B cell (primary cell): ENCODE measurements at regions of chr7 and their contacts with region 1.

Region 1: DNA sequence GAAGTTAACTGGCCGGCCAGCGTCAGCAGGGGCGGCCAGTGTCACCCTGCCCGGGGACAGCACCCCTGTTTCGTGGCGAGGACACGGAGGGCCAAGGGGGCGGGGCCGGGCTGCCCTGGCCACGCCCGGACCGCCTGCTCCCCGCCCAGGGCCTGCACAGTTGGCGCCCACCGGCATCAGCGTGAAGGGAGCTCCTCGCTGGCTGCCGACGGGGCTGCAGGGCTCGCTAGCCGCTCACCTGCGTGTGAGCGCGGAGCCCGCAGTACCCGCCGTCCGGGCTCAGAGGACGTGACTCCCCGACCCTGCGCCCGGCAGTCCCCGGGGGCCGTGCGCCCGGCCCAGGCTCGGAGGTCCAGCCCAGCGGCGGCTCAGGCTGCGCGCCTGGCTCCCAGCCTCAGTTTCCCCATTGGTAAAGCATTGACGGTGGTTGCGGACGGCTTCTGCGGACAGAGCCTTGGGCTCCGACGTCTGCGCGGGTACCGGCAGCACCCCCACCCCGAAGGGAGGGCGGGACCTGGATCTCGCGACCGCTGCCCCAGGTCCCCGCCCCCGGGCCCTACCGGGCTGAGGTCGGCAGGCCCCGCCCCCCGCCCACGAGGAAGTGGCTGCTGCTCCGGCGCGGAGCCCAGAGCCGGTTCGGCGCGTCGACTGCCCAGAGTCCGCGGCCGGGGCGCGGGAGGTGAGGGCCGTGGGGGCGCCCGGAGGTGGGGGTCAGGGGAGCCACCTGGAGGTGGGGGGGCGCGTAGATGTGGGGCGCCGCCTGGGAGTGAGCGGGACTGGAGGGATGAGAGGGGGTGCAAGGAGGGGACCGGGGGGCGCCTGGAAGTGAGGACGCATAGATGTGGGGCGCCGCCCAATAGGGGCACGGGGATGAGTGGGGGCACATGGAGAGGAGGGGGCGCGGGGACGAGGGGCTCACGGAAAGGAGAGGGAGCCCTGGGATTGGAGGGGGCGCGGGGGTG is at the start of gene ARPC1B:
- DNase-seq: peak; percentile 90
- ATAC-seq: peak; percentile 78
- H3K4me3 ChIP-seq: peak within 1 kb of the TSS; percentile 57 to 91 (median 78)
- H3K4me3 Mint-ChIP-seq: peak within 1 kb of the TSS; percentile 84
- H3K27ac ChIP-seq: peak within 1 kb of the TSS; percentile 56 to 94
- H3K27ac Mint-ChIP-seq: peak within 1 kb of the TSS; percentile 82
- H3K4me1 ChIP-seq: peaks cover 35 to 44% of the 10 kb centered on the region in 2 donors
- H3K4me1 Mint-ChIP-seq: peaks cover 19% of the 10 kb centered on the region
- H3K27me3 ChIP-seq: no peaks in the 10 kb centered on the region
- H3K27me3 Mint-ChIP-seq: no peaks in the 10 kb centered on the region
- CTCF ChIP-seq: no peak
- total RNA-seq, gene ARPC1B: 142 and 164 TPM in 2 replicates

Region 2: GRCh38 chr7:99143853-99144672 is 230.3 kb before region 1 on chr7 and contains the start of gene SMURF1:
- CTCF ChIA-PET with region 1: no interaction called
- POLR2A ChIA-PET with region 1: interaction called, 4 read pairs
- intact Hi-C with region 1: loop called (anchors 10 kb)
- DNase-seq: peak; percentile 89
- ATAC-seq: peak; percentile 69
- H3K4me3 ChIP-seq: peak within 1 kb of the TSS; percentile 71 to 97 (median 83)
- H3K4me3 Mint-ChIP-seq: peak within 1 kb of the TSS; percentile 98
- H3K27ac ChIP-seq: peak within 1 kb of the TSS; percentile 42 to 87
- H3K27ac Mint-ChIP-seq: peak within 1 kb of the TSS; percentile 93
- H3K4me1 ChIP-seq: peaks cover 0 to 20% of the 10 kb centered on the region in 2 donors
- H3K4me1 Mint-ChIP-seq: peaks cover 29% of the 10 kb centered on the region
- H3K27me3 ChIP-seq: peaks cover 0 to 2% (median 0%) of the 10 kb centered on the region in 4 experiments
- H3K27me3 Mint-ChIP-seq: peaks cover 4% of the 10 kb centered on the region
- CTCF ChIP-seq: no peak
- total RNA-seq, gene SMURF1: 27.1 and 28.6 TPM in 2 replicates

Region 3: GRCh38 chr7:99325545-99326407 is 48.6 kb before region 1 on chr7 and contains the start of gene ARPC1A:
- CTCF ChIA-PET with region 1: no interaction called
- POLR2A ChIA-PET with region 1: no interaction called
- intact Hi-C with region 1: loop called (anchors 2 kb)
- DNase-seq: peak; percentile 95
- ATAC-seq: peak; percentile 90
- H3K4me3 ChIP-seq: peak within 1 kb of the TSS; percentile 88 to 99 (median 91)
- H3K4me3 Mint-ChIP-seq: peak within 1 kb of the TSS; percentile 85
- H3K27ac ChIP-seq: peak within 1 kb of the TSS; percentile 56 to 80
- H3K27ac Mint-ChIP-seq: peak within 1 kb of the TSS; percentile 92
- H3K4me1 ChIP-seq: peaks cover 22 to 28% of the 10 kb centered on the region in 2 donors
- H3K4me1 Mint-ChIP-seq: peaks cover 36% of the 10 kb centered on the region
- H3K27me3 ChIP-seq: no peaks in the 10 kb centered on the region
- H3K27me3 Mint-ChIP-seq: no peaks in the 10 kb centered on the region
- CTCF ChIP-seq: no peak
- total RNA-seq, gene ARPC1A: 41.7 and 47.8 TPM in 2 replicates

Region 4: GRCh38 chr7:99392677-99393354 is 18.4 kb after region 1 on chr7:
- CTCF ChIA-PET with region 1: interaction called, 7 read pairs
- POLR2A ChIA-PET with region 1: interaction called, 5 read pairs
- intact Hi-C with region 1: loop called (anchors 1 kb)
- DNase-seq: peak; percentile 90
- ATAC-seq: peak; percentile 95
- H3K4me3 ChIP-seq: peak overlapping the region; percentile 16 to 59 (median 50)
- H3K4me3 Mint-ChIP-seq: peak overlapping the region; percentile 94
- H3K27ac ChIP-seq: peak overlapping the region; percentile 43 to 65
- H3K27ac Mint-ChIP-seq: peak overlapping the region; percentile 93
- H3K4me1 ChIP-seq: peaks cover 12 to 20% of the 10 kb centered on the region in 2 donors
- H3K4me1 Mint-ChIP-seq: peaks cover 22% of the 10 kb centered on the region
- H3K27me3 ChIP-seq: no peaks in the 10 kb centered on the region
- H3K27me3 Mint-ChIP-seq: no peaks in the 10 kb centered on the region
- CTCF ChIP-seq: no peak

Region 5: GRCh38 chr7:99438573-99439480 is 64.4 kb after region 1 on chr7 and contains the starts of genes CPSF4 and PTCD1:
- CTCF ChIA-PET with region 1: no interaction called
- POLR2A ChIA-PET with region 1: interaction called, 9 read pairs
- intact Hi-C with region 1: loop called (anchors 2 kb)
- DNase-seq: peak; percentile 93
- ATAC-seq: peak; percentile 96
- H3K4me3 ChIP-seq: peak within 1 kb of the TSS; percentile 41 to 97 (median 92)
- H3K4me3 Mint-ChIP-seq: peak within 1 kb of the TSS; percentile 97
- H3K27ac ChIP-seq: peak within 1 kb of the TSS; percentile 59 to 79
- H3K27ac Mint-ChIP-seq: peak within 1 kb of the TSS; percentile 95
- H3K4me1 ChIP-seq: peaks cover 12 to 28% of the 10 kb centered on the region in 2 donors
- H3K4me1 Mint-ChIP-seq: peaks cover 30% of the 10 kb centered on the region
- H3K27me3 ChIP-seq: no peaks in the 10 kb centered on the region
- H3K27me3 Mint-ChIP-seq: no peaks in the 10 kb centered on the region
- CTCF ChIP-seq: no peak
- total RNA-seq, gene CPSF4: 60.0 and 63.2 TPM in 2 replicates
- total RNA-seq, gene PTCD1: 10.2 and 14.8 TPM in 2 replicates

Region 6: DNA sequence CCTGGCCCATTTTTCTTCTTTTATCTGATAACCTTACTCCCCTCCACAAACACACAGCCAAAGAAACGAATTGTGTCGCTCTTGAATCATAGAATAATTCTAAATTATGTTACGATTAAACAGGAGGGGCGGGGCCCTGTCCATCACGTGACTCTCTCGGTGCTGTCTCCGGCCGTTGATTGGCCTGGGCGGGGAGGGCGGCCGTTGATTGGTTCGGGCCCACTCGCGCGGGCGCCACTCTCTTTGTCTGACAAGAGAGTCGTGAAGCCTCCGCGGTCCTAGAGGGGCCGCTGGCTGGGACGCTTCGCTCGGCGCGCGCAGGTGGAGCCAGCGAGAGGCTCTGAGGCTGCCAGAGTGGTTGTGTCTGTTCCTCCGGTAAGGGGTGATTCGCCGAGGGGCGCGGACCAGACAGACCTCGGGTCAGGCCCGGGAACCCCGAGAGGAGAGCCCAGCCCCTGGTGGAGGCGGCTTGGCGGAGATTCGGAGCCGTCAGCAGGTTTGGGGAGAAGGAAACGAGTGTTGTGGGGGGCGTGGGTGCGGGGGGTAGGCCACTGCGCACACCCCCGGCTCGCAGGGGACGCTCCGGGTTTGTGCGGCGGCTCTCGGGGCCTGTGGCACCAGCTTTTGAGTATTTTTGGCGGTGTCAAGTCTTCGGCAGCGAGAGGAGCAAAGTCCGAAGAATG is 98.3 kb after region 1 on chr7 and contains the start of gene ZNF789:
- CTCF ChIA-PET with region 1: no interaction called
- POLR2A ChIA-PET with region 1: no interaction called
- intact Hi-C with region 1: loop called (anchors 10 kb)
- DNase-seq: peak; percentile 96
- ATAC-seq: peak; percentile 99
- H3K4me3 ChIP-seq: peak within 1 kb of the TSS; percentile 77 to 87 (median 83)
- H3K4me3 Mint-ChIP-seq: peak within 1 kb of the TSS; percentile 95
- H3K27ac ChIP-seq: peak within 1 kb of the TSS; percentile 59 to 82
- H3K27ac Mint-ChIP-seq: peak within 1 kb of the TSS; percentile 96
- H3K4me1 ChIP-seq: peaks cover 8 to 16% of the 10 kb centered on the region in 2 donors
- H3K4me1 Mint-ChIP-seq: peaks cover 30% of the 10 kb centered on the region
- H3K27me3 ChIP-seq: no peaks in the 10 kb centered on the region
- H3K27me3 Mint-ChIP-seq: no peaks in the 10 kb centered on the region
- CTCF ChIP-seq: peak; percentile 9
- total RNA-seq, gene ZNF789: 36.7 and 37.3 TPM in 2 replicates

Region 7: DNA sequence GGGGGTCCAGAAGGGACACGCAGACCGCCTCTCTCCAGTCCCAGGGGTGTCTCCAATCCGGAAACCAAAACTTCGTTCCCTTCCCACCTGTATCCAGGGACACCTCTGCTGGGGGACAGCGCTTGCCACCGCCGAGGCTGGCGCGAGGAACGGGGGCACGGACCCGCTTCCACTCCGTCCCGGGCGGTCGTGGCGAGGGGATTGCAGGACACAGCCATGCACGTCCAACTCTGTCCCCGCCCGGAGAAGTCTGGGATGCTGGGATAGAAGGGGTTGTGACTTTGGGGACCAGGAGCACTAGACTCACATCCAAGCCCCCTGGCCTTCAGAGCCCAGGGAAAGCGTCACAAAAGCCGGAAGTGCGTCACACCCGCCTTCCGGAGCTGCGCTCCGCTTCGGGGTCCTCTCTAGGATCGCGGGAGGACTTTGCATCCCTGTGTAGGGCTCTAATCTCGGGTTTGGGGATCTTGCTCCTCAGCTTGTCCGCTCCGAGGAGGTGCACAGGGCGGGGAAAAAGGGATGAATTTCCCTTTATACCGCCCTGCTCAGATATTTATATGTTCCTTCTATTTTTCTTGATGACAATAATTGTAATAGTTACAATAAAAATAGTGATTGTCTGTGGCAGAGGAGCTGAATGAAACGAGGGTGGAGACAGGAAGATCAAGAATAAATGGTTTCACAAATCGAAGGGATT is 177.5 kb after region 1 on chr7 and contains the start of gene FAM200A:
- CTCF ChIA-PET with region 1: no interaction called
- POLR2A ChIA-PET with region 1: no interaction called
- intact Hi-C with region 1: loop called (anchors 10 kb)
- DNase-seq: peak; percentile 92
- ATAC-seq: peak; percentile 97
- H3K4me3 ChIP-seq: peak within 1 kb of the TSS; percentile 76 to 99 (median 97)
- H3K4me3 Mint-ChIP-seq: peak within 1 kb of the TSS; percentile 88
- H3K27ac ChIP-seq: peak within 1 kb of the TSS; percentile 74 to 95
- H3K27ac Mint-ChIP-seq: peak within 1 kb of the TSS; percentile 86
- H3K4me1 ChIP-seq: peaks cover 17 to 22% of the 10 kb centered on the region in 2 donors
- H3K4me1 Mint-ChIP-seq: peaks cover 33% of the 10 kb centered on the region
- H3K27me3 ChIP-seq: no peaks in the 10 kb centered on the region
- H3K27me3 Mint-ChIP-seq: no peaks in the 10 kb centered on the region
- CTCF ChIP-seq: no peak
- total RNA-seq, gene FAM200A: 11.9 and 12.8 TPM in 2 replicates